ENCODE measurements at regions of chr1 and their contacts with region 1.

Region 1: DNA sequence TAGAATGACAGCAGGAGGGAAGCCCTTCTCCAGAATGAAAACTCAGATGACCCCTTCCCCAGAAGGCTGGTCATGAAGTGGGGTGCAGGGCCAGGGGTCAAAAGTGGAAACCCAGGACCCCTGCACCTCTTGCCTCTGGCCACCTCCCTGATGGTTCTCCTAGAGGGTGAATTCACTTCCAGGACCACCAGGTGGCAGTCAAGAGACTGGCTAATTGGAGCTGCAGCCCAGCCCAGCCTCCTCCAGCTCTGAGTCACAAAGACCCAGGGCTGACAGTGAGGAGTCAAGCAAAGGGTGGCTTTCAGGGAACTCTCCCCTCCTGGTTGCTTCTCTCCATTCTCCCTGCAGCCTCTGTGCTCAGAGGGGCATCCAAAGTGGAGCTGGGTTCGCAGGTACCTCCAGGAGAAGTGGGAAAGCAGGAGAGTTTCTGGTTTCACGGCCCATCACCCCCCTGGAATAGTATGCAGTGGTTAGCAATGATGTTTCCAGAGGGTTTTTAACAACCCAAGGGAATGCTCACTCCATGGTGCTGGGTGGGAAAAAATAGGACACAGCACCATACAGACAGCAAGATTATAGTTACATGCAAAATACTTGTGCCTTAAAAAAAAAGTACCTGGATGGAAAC is 6.1 kb upstream of the EPHB2 start:
- DNase-seq: peak; percentile 86 to 91 (median 88)
- ATAC-seq: peak; percentile 88 to 94
- H3K4me3 ChIP-seq: no peak overlapping the region
- H3K27ac ChIP-seq: no peak overlapping the region
- H3K4me1 ChIP-seq: no peaks in the 10 kb centered on the region
- H3K27me3 ChIP-seq: no peaks in the 10 kb centered on the region

Region 2: DNA sequence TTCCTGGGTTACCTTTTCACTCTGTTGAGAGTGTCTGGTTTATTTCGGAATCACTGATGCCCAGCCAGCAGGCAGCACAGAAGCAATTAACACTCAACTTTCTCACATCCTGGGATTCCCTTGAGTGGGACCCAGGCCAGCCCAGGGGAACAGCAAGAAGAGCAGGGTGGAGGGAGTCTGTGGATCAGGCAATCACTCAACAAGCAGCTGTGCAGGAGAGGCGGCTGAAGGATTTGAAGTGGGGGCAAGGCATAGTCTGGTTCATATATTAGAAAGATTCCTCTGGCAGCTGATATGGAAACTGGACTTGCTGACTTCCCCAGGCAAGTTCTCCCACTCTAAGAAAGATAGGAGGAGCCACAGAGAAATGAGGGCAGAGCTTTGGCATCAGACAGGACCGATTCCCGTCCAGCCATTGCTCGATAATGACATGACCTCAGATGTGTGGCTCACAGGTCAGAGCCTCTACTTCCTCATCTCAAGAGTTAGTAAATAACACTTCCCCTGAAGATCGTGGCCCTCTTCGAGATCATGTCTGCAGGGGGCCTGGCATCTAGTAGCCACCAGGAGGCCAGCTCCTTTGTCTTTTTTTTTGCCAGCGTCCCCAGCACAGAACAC is 128.9 kb before region 1 on chr1:
- intact Hi-C with region 1: no loop called
- DNase-seq: peak in 1 of 3 donors; percentile 27
- ATAC-seq: no peak
- H3K4me3 ChIP-seq: no peak overlapping the region
- H3K27ac ChIP-seq: no peak overlapping the region
- H3K4me1 ChIP-seq: no peaks in the 10 kb centered on the region
- H3K27me3 ChIP-seq: no peaks in the 10 kb centered on the region

Region 3: GRCh38 chr1:22861764-22862440 is 157.3 kb after region 1 on chr1:
- intact Hi-C with region 1: loop called in 1 of 4 experiments (anchors 10 kb)
- DNase-seq: peak in 2 of 3 donors; percentile 37 to 70
- ATAC-seq: peak; percentile 56 to 64
- H3K4me3 ChIP-seq: no peak overlapping the region
- H3K27ac ChIP-seq: no peak overlapping the region
- H3K4me1 ChIP-seq: no peaks in the 10 kb centered on the region
- H3K27me3 ChIP-seq: no peaks in the 10 kb centered on the region

Region 4: GRCh38 chr1:22889213-22889827 is 184.8 kb after region 1 on chr1:
- intact Hi-C with region 1: loop called in 3 of 4 experiments (anchors 5 to 10 kb)
- DNase-seq: no peak
- ATAC-seq: peak; percentile 36 to 37
- H3K4me3 ChIP-seq: no peak overlapping the region
- H3K27ac ChIP-seq: no peak overlapping the region
- H3K4me1 ChIP-seq: no peaks in the 10 kb centered on the region
- H3K27me3 ChIP-seq: no peaks in the 10 kb centered on the region

Region 5: GRCh38 chr1:22922640-22923039 is 218.1 kb after region 1 on chr1:
- intact Hi-C with region 1: loop called in 1 of 4 experiments (anchors 10 kb)
- DNase-seq: no peak
- ATAC-seq: no peak
- H3K4me3 ChIP-seq: no peak overlapping the region
- H3K27ac ChIP-seq: no peak overlapping the region
- H3K4me1 ChIP-seq: no peaks in the 10 kb centered on the region
- H3K27me3 ChIP-seq: no peaks in the 10 kb centered on the region

Region 6: DNA sequence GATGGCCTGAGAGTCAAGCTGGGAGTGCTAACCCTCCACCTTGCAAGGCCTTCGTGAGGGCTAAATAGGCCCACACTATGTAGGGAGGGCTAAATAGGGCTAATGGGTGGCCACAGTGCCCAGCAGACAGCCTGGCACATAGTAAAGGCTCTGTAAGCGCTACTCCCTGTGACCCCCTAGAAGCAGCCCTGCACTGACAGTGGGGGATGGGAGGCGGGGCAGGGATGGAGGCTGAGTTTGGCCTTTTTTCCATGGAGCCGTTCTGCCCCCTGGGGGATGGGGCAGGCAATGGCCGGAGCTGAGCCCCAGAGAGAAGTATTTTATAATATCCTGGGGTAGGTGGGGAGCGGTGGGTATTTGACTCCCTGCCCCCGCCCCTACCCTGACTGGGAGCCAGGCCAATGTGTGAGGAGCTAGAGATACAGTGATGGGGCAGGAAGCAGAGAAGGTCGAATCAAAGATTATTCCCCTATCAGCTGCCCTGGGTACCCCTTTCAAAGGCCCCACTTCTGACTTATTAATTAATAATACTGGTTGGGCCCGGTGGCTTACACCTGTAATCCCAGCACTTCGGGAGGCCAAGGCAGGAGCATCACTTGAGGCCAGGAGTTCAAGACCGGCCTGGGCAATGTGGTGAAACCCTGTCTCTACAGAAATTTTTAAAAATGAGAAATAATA is 225.8 kb after region 1 on chr1:
- intact Hi-C with region 1: loop called in 3 of 4 experiments (anchors 5 to 10 kb)
- DNase-seq: peak; percentile 44 to 81 (median 78)
- ATAC-seq: peak; percentile 73 to 76
- H3K4me3 ChIP-seq: no peak overlapping the region
- H3K27ac ChIP-seq: no peak overlapping the region
- H3K4me1 ChIP-seq: peaks cover 3% of the 10 kb centered on the region
- H3K27me3 ChIP-seq: no peaks in the 10 kb centered on the region